Mammary epithelial cell (primary cell): ENCODE measurements at regions of chr5 and their contacts with region 1.

Region 1: GRCh38 chr5:150560401-150561193 is 52.7 kb downstream of the NDST1 start:
- DNase-seq: peak; percentile 68
- H3K4me3 ChIP-seq: no peak overlapping the region
- H3K27ac ChIP-seq: no peak overlapping the region
- H3K4me1 ChIP-seq: no peaks in the 10 kb centered on the region
- H3K27me3 ChIP-seq: no peaks in the 10 kb centered on the region
- CTCF ChIP-seq: peak; percentile 84 to 89

Region 2: GRCh38 chr5:150263801-150264621 is 296.6 kb before region 1 on chr5:
- CTCF ChIA-PET with region 1: no interaction called
- dilution Hi-C with region 1: no loop called
- in situ Hi-C with region 1: no loop called
- intact Hi-C with region 1: no loop called
- DNase-seq: peak; percentile 98
- H3K4me3 ChIP-seq: no peak overlapping the region
- H3K27ac ChIP-seq: no peak overlapping the region
- H3K4me1 ChIP-seq: peaks cover 30% of the 10 kb centered on the region
- H3K27me3 ChIP-seq: no peaks in the 10 kb centered on the region
- CTCF ChIP-seq: no peak

Region 3: DNA sequence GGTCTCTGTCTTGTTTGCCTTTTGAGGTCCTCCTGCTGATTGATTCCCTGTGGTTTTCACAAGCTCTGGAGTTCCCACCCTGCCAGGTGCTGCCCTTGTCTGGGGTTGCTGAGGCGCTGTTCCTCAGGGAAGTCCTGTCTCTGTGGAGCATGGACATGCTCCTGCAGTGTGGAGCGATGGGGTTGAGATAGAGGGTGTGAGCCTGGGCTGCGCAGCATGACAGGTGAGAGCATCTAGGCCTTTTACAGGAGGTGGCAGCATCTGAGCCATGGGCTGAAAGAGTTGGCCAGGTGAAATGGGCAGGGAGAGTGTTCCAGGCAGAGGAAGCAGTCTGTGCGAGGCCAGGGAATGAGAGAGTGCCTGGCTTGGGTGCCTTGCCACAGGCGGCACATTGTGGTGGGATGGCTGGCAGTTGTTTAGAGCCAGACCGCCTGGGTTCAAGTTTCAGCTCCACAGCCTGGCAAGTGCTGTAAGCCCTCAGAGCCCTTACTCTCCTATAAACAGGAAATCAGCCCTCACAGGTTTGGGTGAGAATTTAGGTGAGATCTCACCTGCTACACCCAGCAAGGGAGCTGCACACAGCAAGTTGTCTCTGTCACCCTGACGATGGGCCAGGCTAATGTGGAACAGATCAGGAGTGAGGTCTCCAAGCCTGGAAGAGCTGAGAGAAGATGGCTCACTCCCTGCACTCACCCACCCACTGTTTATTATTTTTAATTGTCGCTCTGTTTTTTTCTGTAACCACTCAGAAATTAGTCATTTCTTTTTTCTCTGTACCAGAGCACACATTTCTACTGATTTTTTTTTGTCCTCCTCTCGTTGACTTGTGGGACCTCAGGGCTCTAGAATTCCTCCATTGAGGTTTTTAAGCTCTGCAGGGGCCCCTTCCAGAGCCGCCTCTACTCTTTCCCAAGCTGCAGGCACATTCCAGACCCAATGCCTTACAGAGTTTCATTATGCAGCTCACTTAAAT is 183.5 kb before region 1 on chr5:
- CTCF ChIA-PET with region 1: no interaction called
- dilution Hi-C with region 1: no loop called
- in situ Hi-C with region 1: no loop called
- intact Hi-C with region 1: no loop called
- DNase-seq: no peak
- H3K4me3 ChIP-seq: no peak overlapping the region
- H3K27ac ChIP-seq: no peak overlapping the region
- H3K4me1 ChIP-seq: peaks cover 12% of the 10 kb centered on the region
- H3K27me3 ChIP-seq: no peaks in the 10 kb centered on the region
- CTCF ChIP-seq: no peak

Region 4: GRCh38 chr5:150449517-150450339 is 110.9 kb before region 1 on chr5 and contains the start of gene RPS14:
- CTCF ChIA-PET with region 1: no interaction called
- dilution Hi-C with region 1: loop called (anchors 10 kb)
- in situ Hi-C with region 1: no loop called
- intact Hi-C with region 1: no loop called
- DNase-seq: peak; percentile 94
- H3K4me3 ChIP-seq: peak within 1 kb of the TSS; percentile 79 to 86 (median 79)
- H3K27ac ChIP-seq: peak within 1 kb of the TSS; percentile 88
- H3K4me1 ChIP-seq: peaks cover 17% of the 10 kb centered on the region
- H3K27me3 ChIP-seq: no peaks in the 10 kb centered on the region
- CTCF ChIP-seq: peak; percentile 80 to 86
- total RNA-seq, gene RPS14: 1,819 to 2,158 TPM

Region 5: GRCh38 chr5:150599917-150600499 is 39.4 kb after region 1 on chr5:
- CTCF ChIA-PET with region 1: no interaction called
- dilution Hi-C with region 1: no loop called
- in situ Hi-C with region 1: no loop called
- intact Hi-C with region 1: no loop called
- DNase-seq: peak; percentile 94
- H3K4me3 ChIP-seq: peak overlapping the region in 1 of 3 experiments; percentile 27
- H3K27ac ChIP-seq: peak overlapping the region; percentile 86
- H3K4me1 ChIP-seq: peaks cover 35% of the 10 kb centered on the region
- H3K27me3 ChIP-seq: no peaks in the 10 kb centered on the region
- CTCF ChIP-seq: no peak

Region 6: GRCh38 chr5:150640311-150641005 is 79.9 kb after region 1 on chr5 and contains the start of gene SYNPO:
- CTCF ChIA-PET with region 1: no interaction called
- dilution Hi-C with region 1: no loop called
- in situ Hi-C with region 1: loop called in 1 of 2 experiments (anchors 5 kb)
- intact Hi-C with region 1: no loop called
- DNase-seq: peak; percentile 97
- H3K4me3 ChIP-seq: peak within 1 kb of the TSS in 1 of 3 experiments; percentile 23
- H3K27ac ChIP-seq: peak within 1 kb of the TSS; percentile 49
- H3K4me1 ChIP-seq: peaks cover 81% of the 10 kb centered on the region
- H3K27me3 ChIP-seq: no peaks in the 10 kb centered on the region
- CTCF ChIP-seq: no peak
- total RNA-seq, gene SYNPO: 1.3 to 5.3 TPM

Region 7: GRCh38 chr5:150700594-150701293 is 140.1 kb after region 1 on chr5 and contains the start of gene RBM22:
- CTCF ChIA-PET with region 1: no interaction called
- dilution Hi-C with region 1: no loop called
- in situ Hi-C with region 1: no loop called
- intact Hi-C with region 1: loop called (anchors 1 kb)
- DNase-seq: peak; percentile 83
- H3K4me3 ChIP-seq: peak within 1 kb of the TSS; percentile 73 to 97 (median 84)
- H3K27ac ChIP-seq: peak within 1 kb of the TSS; percentile 78
- H3K4me1 ChIP-seq: peaks cover 11% of the 10 kb centered on the region
- H3K27me3 ChIP-seq: no peaks in the 10 kb centered on the region
- CTCF ChIP-seq: peak; percentile 22 to 74
- total RNA-seq, gene RBM22: 28.5 to 34.7 TPM

Region 8: DNA sequence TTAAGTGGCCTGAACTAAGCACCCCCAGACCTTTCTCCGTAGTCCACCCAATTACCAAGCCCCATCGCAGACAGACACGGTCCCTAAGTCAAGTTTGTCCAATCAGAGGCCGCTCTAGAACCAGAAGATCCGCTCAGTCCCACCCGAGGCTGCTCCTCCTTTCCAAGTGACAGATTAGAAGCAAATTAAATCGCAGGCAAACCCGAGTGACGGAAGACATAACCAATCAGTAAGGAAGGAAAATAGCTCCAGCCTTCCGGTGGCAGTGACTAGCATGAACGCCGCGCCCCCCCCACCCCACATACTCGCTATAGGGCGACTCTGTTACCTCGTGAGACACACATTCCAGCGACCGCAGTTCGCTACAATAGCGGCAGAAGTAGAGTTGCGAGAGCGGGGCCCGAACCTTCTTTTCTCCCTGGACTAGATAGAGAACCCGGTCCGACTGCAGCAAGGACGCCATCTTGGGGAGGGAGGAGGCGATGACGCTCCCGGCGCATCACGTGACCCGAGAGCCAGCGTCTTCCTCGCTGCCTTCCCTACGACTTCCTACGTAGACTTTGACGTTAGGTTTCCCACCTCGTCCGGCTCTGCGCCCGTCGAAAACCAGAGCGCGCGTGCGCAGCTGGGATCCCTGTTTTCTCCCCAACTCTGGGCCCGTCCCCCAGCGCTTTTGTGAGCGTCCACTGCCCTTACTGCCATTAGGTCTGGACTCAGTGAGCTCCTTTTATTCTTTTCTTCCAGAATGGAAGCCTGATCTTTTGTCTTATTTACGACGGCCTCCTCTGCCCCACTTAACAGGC is 198.1 kb after region 1 on chr5 and contains the start of gene DCTN4:
- CTCF ChIA-PET with region 1: no interaction called
- dilution Hi-C with region 1: no loop called
- in situ Hi-C with region 1: no loop called
- intact Hi-C with region 1: loop called (anchors 5 kb)
- DNase-seq: peak; percentile 100
- H3K4me3 ChIP-seq: peak within 1 kb of the TSS; percentile 73 to 75 (median 74)
- H3K27ac ChIP-seq: peak within 1 kb of the TSS; percentile 93
- H3K4me1 ChIP-seq: peaks cover 23% of the 10 kb centered on the region
- H3K27me3 ChIP-seq: no peaks in the 10 kb centered on the region
- CTCF ChIP-seq: no peak
- total RNA-seq, gene DCTN4: 64.7 to 70.9 TPM

Region 9: GRCh38 chr5:150846654-150847333 is 286.2 kb after region 1 on chr5:
- CTCF ChIA-PET with region 1: interaction called, 3 read pairs
- dilution Hi-C with region 1: loop called (anchors 25 kb)
- in situ Hi-C with region 1: loop called (anchors 5 kb)
- intact Hi-C with region 1: loop called (anchors 1 kb)
- DNase-seq: peak; percentile 73
- H3K4me3 ChIP-seq: no peak overlapping the region
- H3K27ac ChIP-seq: no peak overlapping the region
- H3K4me1 ChIP-seq: no peaks in the 10 kb centered on the region
- H3K27me3 ChIP-seq: no peaks in the 10 kb centered on the region
- CTCF ChIP-seq: peak; percentile 56 to 66